Gastrocnemius medialis (tissue), 4 donors: ENCODE measurements at regions of chr15 and their contacts with region 1.

Region 1: DNA sequence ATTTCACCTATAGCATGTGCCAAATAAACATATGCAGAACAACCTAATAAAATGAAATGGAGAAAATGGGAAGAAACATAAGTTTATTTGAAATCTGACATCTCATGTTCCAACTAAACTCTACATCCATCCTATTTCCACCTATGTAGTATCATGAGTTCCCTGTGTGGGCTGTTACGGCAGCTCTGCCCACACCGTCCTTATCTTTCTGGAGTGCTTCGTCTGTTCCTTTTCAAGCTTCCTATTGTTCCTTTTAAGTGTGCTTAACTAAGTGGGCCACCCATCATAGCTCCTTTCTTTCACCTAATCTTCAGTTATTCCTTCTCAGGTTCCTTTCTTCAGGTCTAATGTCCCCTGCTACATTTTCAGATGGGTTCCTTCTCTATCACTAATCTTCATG is 17.3 kb downstream of the RYR3 start:
- DNase-seq: no peak
- ATAC-seq: no peak
- H3K4me3 ChIP-seq: no peak overlapping the region
- H3K27ac ChIP-seq: no peak overlapping the region
- H3K4me1 ChIP-seq: peaks cover 0 to 4% of the 10 kb centered on the region in 2 donors
- H3K27me3 ChIP-seq: no peaks in the 10 kb centered on the region
- CTCF ChIP-seq: no peak
- POLR2A ChIP-seq: no peak

Region 2: DNA sequence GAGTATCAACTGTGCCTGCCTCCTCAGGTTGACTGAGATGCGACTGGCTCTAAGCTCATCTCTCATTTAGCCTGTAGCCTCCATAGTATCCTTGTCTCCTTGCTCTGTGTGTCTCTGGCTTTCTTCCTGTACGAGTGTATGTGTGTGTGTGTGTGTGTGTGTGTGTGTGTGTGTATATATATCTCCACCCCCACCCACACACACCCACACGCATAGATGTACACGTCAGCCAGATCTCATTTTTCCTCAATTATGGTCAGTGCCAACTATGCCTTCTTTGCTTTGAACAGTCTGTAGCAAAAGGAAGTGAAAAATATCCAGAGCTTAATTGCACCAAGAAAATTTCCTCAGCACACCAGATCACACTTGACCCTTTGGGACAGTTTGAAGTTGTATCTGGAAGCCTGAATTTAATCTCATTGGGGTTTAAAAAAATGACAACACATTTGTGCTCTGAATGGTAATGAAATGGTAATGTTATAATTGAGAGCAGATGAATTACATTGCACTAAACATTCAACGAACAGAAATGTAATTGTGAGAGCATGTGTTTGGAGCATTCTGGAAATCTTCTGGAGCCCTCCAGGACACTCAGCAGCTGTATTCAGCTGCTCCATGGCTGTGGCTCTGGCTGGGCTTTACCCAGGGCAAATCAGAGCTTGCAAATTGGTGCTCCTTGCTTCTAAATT is 46.3 kb after region 1 on chr15:
- in situ Hi-C with region 1: no loop called
- intact Hi-C with region 1: loop called (anchors 5 kb)
- DNase-seq: no peak
- ATAC-seq: no peak
- H3K4me3 ChIP-seq: no peak overlapping the region
- H3K27ac ChIP-seq: peak overlapping the region in 1 of 4 donors; percentile 36
- H3K4me1 ChIP-seq: peaks cover 0 to 10% of the 10 kb centered on the region in 2 donors
- H3K27me3 ChIP-seq: no peaks in the 10 kb centered on the region
- CTCF ChIP-seq: no peak
- POLR2A ChIP-seq: no peak